Activated naive CD4-positive, alpha-beta T cell treated with anti-CD3 and anti-CD28 coated beads for 36 hours (primary cell): ENCODE measurements at regions of chr6 and their contacts with region 1.

Region 1: GRCh38 chr6:41787219-41787917 is at the start of gene TOMM6:
- DNase-seq: peak; percentile 97
- H3K4me3 Mint-ChIP-seq: peak within 1 kb of the TSS; percentile 92
- H3K27ac Mint-ChIP-seq: peak within 1 kb of the TSS; percentile 94
- H3K4me1 Mint-ChIP-seq: peaks cover 24% of the 10 kb centered on the region
- H3K27me3 Mint-ChIP-seq: no peaks in the 10 kb centered on the region
- total RNA-seq, gene TOMM6: 285 to 299 TPM

Region 2: GRCh38 chr6:41675176-41675770 is 112.1 kb before region 1 on chr6:
- CTCF ChIA-PET with region 1: no interaction called
- intact Hi-C with region 1: no loop called
- DNase-seq: no peak
- H3K4me3 Mint-ChIP-seq: no peak overlapping the region
- H3K27ac Mint-ChIP-seq: no peak overlapping the region
- H3K4me1 Mint-ChIP-seq: no peaks in the 10 kb centered on the region
- H3K27me3 Mint-ChIP-seq: peaks cover 6% of the 10 kb centered on the region

Region 3: GRCh38 chr6:41723530-41724227 is 63.7 kb before region 1 on chr6:
- CTCF ChIA-PET with region 1: no interaction called
- intact Hi-C with region 1: no loop called
- DNase-seq: no peak
- H3K4me3 Mint-ChIP-seq: no peak overlapping the region
- H3K27ac Mint-ChIP-seq: no peak overlapping the region
- H3K4me1 Mint-ChIP-seq: peaks cover 5% of the 10 kb centered on the region
- H3K27me3 Mint-ChIP-seq: no peaks in the 10 kb centered on the region

Region 4: DNA sequence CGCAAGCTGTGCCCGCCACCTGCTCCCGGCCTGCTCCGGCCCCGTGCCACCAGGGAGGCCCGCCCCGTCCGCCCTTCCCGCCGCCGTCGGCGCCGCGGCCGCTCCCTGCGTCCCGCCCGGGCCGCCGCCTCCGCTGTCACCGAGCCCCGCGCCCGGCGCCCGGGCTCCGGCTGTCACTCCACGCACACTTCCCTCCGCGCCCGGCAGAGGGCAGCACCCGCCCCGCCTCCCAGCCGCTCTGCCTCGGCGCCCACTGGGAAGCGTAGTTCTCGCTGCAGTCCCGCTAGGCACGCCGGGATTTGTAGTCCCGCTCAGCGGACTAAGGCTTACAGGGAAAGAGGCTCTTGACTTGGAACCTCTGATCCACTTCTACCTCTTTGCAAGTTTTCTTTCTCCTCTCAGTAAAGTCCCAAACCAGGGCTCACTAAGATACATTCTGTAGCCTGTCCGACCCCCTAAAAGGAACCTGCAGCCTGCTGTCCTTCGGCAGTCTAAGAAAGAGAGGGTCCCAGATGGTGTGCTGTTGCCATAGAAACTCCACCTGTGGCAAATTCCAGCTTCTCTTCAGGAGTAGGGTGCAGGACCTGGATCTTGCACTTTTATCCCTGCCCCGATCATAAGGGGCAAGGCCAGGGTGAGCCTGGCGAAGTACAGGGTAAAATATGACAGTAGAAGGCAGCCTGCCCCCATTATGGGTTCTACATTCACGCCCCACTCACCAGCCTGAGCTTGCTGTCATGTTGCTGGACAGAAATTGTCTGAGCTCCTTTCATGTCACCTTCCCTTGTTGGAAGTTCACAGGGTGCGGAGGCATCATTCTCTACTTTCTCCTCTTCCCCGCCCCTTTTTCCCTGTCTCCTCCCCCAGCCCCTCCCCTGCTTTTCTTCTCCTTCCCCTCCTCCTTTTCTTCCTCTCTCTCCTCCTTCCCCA is 51.7 kb before region 1 on chr6 and contains the start of gene TFEB:
- CTCF ChIA-PET with region 1: interaction called, 18 read pairs
- intact Hi-C with region 1: loop called (anchors 1 kb)
- DNase-seq: peak; percentile 96
- H3K4me3 Mint-ChIP-seq: peak within 1 kb of the TSS; percentile 72
- H3K27ac Mint-ChIP-seq: no peak within 1 kb of the TSS
- H3K4me1 Mint-ChIP-seq: peaks cover 21% of the 10 kb centered on the region
- H3K27me3 Mint-ChIP-seq: no peaks in the 10 kb centered on the region
- total RNA-seq, gene TFEB: 5.7 to 7.9 TPM

Region 5: GRCh38 chr6:41767156-41767833 is 20.1 kb before region 1 on chr6:
- CTCF ChIA-PET with region 1: no interaction called
- intact Hi-C with region 1: no loop called
- DNase-seq: no peak
- H3K4me3 Mint-ChIP-seq: no peak overlapping the region
- H3K27ac Mint-ChIP-seq: no peak overlapping the region
- H3K4me1 Mint-ChIP-seq: peaks cover 8% of the 10 kb centered on the region
- H3K27me3 Mint-ChIP-seq: no peaks in the 10 kb centered on the region

Region 6: DNA sequence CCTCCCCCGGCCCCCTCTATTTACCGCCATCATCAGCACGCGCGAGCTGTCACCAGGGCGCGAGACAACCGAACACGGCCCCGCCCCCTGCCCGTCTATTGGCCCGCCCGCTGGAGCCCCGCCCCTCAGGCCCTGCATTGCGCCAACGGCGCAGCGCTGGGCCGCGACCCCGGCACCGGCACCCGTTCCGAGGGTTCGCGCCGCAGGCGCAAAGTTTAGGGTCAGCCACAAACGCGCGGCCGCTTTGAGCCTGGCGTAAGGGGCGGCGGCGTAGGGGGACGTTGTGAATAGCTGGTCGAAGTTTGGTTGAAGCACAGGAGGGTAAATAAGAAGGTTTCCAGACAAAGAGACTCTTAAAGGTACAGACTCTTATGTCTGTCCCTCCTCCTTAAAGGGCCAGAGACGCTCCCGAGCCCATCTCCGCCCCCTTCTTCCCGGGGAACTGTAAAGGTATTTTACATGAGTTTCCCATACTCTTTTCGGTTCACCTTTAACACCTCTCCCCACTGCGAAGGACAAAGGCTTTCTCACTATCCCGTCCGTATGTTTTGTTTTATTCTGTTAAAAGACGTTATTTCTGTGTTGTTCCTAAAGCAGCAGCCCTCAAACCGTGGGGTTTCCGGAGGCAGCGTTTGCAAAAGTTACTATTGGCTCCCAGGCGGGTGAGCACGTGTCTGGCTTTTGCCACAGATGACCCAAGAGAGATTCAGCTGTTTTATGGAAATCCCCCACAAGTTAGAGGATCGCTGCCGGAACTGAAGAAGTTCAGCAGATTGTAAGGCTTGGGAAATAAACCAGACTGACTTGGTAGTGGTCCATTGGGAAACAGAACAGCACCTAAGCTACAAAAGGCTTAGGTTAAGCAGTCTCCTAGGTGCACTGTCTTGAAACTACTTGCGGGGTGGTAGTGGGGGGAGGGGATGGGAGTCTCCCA is 108.2 kb after region 1 on chr6 and contains the start of gene USP49:
- CTCF ChIA-PET with region 1: interaction called, 3 read pairs
- intact Hi-C with region 1: loop called (anchors 1 kb)
- DNase-seq: peak; percentile 93
- H3K4me3 Mint-ChIP-seq: no peak within 1 kb of the TSS
- H3K27ac Mint-ChIP-seq: peak within 1 kb of the TSS; percentile 91
- H3K4me1 Mint-ChIP-seq: peaks cover 11% of the 10 kb centered on the region
- H3K27me3 Mint-ChIP-seq: no peaks in the 10 kb centered on the region
- total RNA-seq, gene USP49: 8.3 to 8.4 TPM

Region 7: GRCh38 chr6:41936073-41936837 is 148.9 kb after region 1 on chr6:
- CTCF ChIA-PET with region 1: interaction called, 6 read pairs
- intact Hi-C with region 1: loop called (anchors 5 kb)
- DNase-seq: peak; percentile 80
- H3K4me3 Mint-ChIP-seq: peak overlapping the region; percentile 100
- H3K27ac Mint-ChIP-seq: peak overlapping the region; percentile 99
- H3K4me1 Mint-ChIP-seq: peaks cover 38% of the 10 kb centered on the region
- H3K27me3 Mint-ChIP-seq: no peaks in the 10 kb centered on the region

Region 8: GRCh38 chr6:42028234-42029061 is 241.1 kb after region 1 on chr6:
- CTCF ChIA-PET with region 1: no interaction called
- intact Hi-C with region 1: no loop called
- DNase-seq: peak; percentile 70
- H3K4me3 Mint-ChIP-seq: peak overlapping the region; percentile 68
- H3K27ac Mint-ChIP-seq: peak overlapping the region; percentile 99
- H3K4me1 Mint-ChIP-seq: peaks cover 94% of the 10 kb centered on the region
- H3K27me3 Mint-ChIP-seq: no peaks in the 10 kb centered on the region

Region 9: GRCh38 chr6:42050266-42051032 is 263.1 kb after region 1 on chr6 and contains the start of gene TAF8:
- CTCF ChIA-PET with region 1: interaction called, 143 read pairs
- intact Hi-C with region 1: no loop called
- DNase-seq: peak; percentile 95
- H3K4me3 Mint-ChIP-seq: peak within 1 kb of the TSS; percentile 83
- H3K27ac Mint-ChIP-seq: peak within 1 kb of the TSS; percentile 88
- H3K4me1 Mint-ChIP-seq: peaks cover 64% of the 10 kb centered on the region
- H3K27me3 Mint-ChIP-seq: no peaks in the 10 kb centered on the region
- total RNA-seq, gene TAF8: 67.3 to 68.5 TPM

Region 10: DNA sequence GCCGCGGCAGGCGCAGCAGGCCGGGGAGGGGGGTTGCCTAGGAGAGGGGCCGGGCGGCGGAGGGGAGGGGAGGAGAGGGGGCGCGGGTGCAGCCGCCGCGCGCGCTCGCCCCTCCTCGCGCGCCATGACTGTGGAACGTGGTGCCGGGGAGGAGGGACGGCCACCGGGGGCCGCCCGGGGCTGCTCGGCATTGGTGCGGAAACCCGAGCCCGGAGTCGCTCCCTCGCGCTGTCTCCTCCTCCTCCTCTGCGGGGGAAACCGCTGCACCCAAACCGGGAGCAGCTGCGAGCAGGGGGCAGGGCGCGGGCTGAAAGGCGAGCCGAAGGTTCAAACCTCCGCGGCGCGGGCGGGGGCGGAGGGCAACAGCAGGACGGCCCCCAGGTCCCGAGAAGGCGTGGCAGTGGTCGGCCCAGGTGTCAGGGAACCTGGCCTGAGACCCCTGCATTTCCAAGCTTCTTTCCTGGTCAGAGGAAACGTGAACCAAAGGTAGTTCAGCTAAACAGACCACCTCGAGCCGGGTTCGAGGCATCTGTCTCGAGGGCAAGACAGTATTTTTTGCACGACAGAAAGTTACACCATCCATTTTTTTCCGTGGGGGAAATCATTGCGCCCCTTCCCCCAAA is 665.8 kb after region 1 on chr6:
- CTCF ChIA-PET with region 1: no interaction called
- intact Hi-C with region 1: loop called (anchors 10 kb)
- DNase-seq: peak; percentile 87
- H3K4me3 Mint-ChIP-seq: peak overlapping the region; percentile 88
- H3K27ac Mint-ChIP-seq: peak overlapping the region; percentile 81
- H3K4me1 Mint-ChIP-seq: peaks cover 32% of the 10 kb centered on the region
- H3K27me3 Mint-ChIP-seq: peaks cover 7% of the 10 kb centered on the region

Region 11: GRCh38 chr6:42782622-42783176 is 995.3 kb after region 1 on chr6:
- CTCF ChIA-PET with region 1: no interaction called
- intact Hi-C with region 1: loop called (anchors 5 kb)
- DNase-seq: peak; percentile 75
- H3K4me3 Mint-ChIP-seq: peak overlapping the region; percentile 81
- H3K27ac Mint-ChIP-seq: peak overlapping the region; percentile 100
- H3K4me1 Mint-ChIP-seq: peaks cover 26% of the 10 kb centered on the region
- H3K27me3 Mint-ChIP-seq: no peaks in the 10 kb centered on the region